Vagina (tissue), 2 donors: ENCODE measurements at regions of chr5 and their contacts with region 1.

Region 1: GRCh38 chr5:58653521-58653920 is 70.6 kb downstream of the RAB3C start:
- DNase-seq: no peak
- H3K4me3 ChIP-seq: no peak overlapping the region
- H3K27ac ChIP-seq: no peak overlapping the region
- H3K4me1 ChIP-seq: peaks cover 5% of the 10 kb centered on the region
- H3K27me3 ChIP-seq: no peaks in the 10 kb centered on the region
- CTCF ChIP-seq: no peak
- POLR2A ChIP-seq: no peak

Region 2: DNA sequence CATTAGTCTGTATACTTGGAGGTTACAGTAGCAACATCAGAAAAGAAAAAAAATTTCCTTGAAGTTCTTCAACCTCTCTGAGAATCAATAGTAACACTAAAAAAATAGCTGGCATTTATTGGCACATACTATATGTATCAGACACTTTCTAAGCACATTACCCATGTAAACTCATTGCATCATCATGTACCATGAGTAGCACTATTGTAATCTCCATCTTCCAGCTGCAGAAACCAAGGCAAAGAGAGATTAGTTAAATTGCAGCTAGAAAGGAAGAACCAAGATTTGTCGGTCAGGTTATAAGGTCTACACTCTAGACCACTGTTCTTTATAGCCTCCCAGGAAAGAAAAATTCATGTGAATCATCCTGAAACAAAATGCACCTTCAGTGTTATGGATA is 102.0 kb before region 1 on chr5:
- intact Hi-C with region 1: no loop called
- DNase-seq: no peak
- H3K4me3 ChIP-seq: no peak overlapping the region
- H3K27ac ChIP-seq: no peak overlapping the region
- H3K4me1 ChIP-seq: no peaks in the 10 kb centered on the region
- H3K27me3 ChIP-seq: no peaks in the 10 kb centered on the region
- CTCF ChIP-seq: no peak
- POLR2A ChIP-seq: no peak

Region 3: DNA sequence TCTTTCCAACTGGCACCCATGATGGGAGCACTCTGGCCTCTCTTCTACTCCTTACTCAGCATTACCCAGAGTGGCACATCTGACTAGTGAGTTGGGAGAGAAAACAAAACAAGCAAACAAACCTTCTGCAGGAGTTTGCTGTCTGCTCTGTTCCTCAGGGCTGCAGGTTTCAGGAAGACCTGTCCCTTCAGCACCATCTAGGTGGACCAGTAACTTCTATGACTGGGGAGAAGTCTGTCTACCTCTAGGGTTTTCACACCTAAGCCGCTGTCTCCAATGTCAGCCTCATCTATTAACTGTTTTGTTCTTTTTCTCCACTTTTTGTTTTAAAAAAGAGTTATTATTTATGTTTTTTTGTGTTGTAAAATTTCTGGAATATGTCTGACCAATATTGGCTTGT is 12.0 kb before region 1 on chr5:
- intact Hi-C with region 1: no loop called
- DNase-seq: no peak
- H3K4me3 ChIP-seq: no peak overlapping the region
- H3K27ac ChIP-seq: no peak overlapping the region
- H3K4me1 ChIP-seq: no peaks in the 10 kb centered on the region
- H3K27me3 ChIP-seq: no peaks in the 10 kb centered on the region
- CTCF ChIP-seq: no peak
- POLR2A ChIP-seq: no peak

Region 4: GRCh38 chr5:58849921-58850667 is 196.6 kb after region 1 on chr5:
- intact Hi-C with region 1: no loop called
- DNase-seq: no peak
- H3K4me3 ChIP-seq: no peak overlapping the region
- H3K27ac ChIP-seq: no peak overlapping the region
- H3K4me1 ChIP-seq: no peaks in the 10 kb centered on the region
- H3K27me3 ChIP-seq: no peaks in the 10 kb centered on the region
- CTCF ChIP-seq: peak in 1 of 3 experiments; percentile 14
- POLR2A ChIP-seq: no peak

Region 5: GRCh38 chr5:58983526-58984452 is 330.3 kb after region 1 on chr5:
- intact Hi-C with region 1: loop called (anchors 5 kb)
- DNase-seq: no peak
- H3K4me3 ChIP-seq: no peak overlapping the region
- H3K27ac ChIP-seq: no peak overlapping the region
- H3K4me1 ChIP-seq: no peaks in the 10 kb centered on the region
- H3K27me3 ChIP-seq: no peaks in the 10 kb centered on the region
- CTCF ChIP-seq: no peak
- POLR2A ChIP-seq: no peak